ENCODE measurements at regions of chr4 and their contacts with region 1.

Region 1: GRCh38 chr4:80365928-80366327 is 30.4 kb downstream of the CFAP299 start:
- DNase-seq: peak; percentile 41
- CTCF ChIP-seq: peak; percentile 47

Region 2: DNA sequence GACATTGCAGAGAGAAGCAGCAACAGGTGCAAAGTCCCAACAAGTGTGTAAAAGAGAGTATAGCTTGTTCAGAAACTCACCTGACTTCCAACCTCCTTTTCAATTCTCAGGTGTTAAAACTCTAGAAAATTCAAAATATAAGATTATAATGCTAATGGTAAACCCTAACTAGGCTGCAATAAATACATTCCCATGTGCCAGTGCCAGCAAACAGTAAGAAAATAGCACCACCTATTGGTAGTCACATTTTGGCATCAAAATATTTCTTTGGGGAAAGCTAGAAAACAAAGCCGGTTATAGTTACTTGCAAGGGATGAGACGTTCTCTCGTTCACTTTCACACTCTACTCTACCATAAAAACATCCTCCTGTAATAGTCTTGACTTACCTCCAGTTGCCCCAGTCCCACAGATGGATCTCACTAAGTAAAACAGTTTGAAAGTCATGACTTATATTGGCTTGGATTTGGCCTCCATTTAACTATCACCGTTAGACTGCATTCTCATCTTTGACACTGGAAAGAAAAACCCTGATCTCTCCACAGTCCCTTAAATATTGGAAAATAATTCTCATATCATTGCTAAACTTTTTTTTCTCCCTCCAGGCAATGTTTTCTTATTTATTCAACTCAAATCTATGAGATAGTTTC is 674.2 kb after region 1 on chr4:
- in situ Hi-C with region 1: loop called (anchors 5 kb)
- DNase-seq: no peak
- CTCF ChIP-seq: peak; percentile 54

Region 3: DNA sequence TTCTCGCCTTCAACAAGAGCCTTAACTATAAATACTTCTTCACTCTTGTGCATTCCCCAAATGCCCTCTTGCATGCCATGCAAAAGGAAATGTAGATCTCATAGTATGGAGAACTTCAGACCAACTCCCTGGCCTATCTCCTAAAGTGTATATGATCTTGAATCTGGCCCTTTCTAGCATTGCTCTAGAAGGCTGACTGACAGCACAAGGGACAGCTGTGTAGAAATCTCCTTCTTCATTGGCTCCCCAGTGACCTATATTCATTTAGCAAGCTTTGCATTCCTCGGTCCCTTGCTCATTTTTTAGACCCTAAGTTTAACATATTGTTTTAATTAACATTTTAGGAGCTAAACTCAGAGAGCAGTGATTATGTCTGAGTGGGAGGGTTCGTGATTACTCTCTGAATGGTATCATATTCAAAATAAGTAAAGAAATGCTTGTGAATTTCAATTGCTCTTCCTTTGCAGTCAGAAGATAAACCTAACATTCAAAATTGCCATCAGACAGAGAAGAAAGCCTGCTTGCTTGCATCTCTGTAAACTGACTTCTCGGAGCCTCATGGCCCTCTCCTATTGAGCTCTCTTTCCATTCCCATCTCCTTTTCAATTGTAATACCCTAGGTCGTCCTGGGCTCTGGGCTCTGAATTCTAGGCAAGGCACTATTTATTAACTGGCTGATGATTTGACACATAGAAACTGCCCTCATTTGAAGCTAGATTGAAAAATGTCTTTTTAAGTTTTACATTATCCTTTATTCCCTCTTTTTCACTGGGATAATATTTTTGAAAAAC is 969.4 kb after region 1 on chr4:
- in situ Hi-C with region 1: loop called (anchors 25 kb)
- DNase-seq: no peak
- CTCF ChIP-seq: no peak